CD8-positive, alpha-beta T cell (primary cell): ENCODE measurements at regions of chr1 and their contacts with region 1.

Region 1: GRCh38 chr1:43227143-43227764 is 42.5 kb upstream of the TMEM125 start:
- DNase-seq: peak; percentile 70 to 91 (median 82)
- ATAC-seq: peak; percentile 91
- H3K4me3 ChIP-seq: no peak overlapping the region
- H3K4me3 Mint-ChIP-seq: no peak overlapping the region
- H3K27ac ChIP-seq: no peak overlapping the region
- H3K27ac Mint-ChIP-seq: no peak overlapping the region
- H3K4me1 ChIP-seq: no peaks in the 10 kb centered on the region
- H3K4me1 Mint-ChIP-seq: no peaks in the 10 kb centered on the region
- H3K27me3 ChIP-seq: no peaks in the 10 kb centered on the region
- H3K27me3 Mint-ChIP-seq: peaks cover 3% of the 10 kb centered on the region
- CTCF ChIP-seq: peak; percentile 83

Region 2: DNA sequence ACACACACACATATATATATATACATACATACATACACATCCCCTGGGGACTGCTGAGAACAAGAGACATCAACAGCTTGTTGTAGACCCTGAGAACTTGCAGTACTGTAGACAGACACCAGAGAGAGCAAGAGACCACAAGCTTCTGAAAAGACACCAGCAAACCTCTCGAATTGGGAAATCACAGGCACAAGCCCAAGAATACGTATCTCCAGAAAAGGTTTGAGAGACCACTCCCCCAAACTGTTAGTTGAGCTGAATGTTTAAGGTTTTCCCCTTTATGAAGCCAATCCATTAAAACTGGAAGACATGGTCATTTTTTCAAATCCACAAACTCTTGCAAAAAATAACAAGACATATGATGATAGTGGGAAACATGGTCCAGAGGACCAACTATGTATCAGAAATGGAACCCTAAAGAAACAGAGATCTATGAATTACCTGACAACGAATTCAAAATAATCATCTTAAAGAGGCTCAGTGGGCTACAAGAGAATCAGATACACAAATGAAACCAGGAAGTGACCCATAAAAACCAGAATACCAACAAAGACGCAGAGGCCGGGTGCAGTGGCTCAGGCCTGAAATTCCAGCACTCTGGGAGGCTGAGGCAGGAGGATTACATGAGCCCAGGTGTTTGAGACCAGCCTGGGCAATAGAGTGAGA is 313.7 kb before region 1 on chr1:
- CTCF ChIA-PET with region 1: interaction called, 5 read pairs
- POLR2A ChIA-PET with region 1: no interaction called
- intact Hi-C with region 1: loop called in 1 of 2 experiments (anchors 1 kb)
- DNase-seq: peak in 6 of 9 experiments; percentile 45 to 87 (median 64)
- ATAC-seq: peak; percentile 99
- H3K4me3 ChIP-seq: no peak overlapping the region
- H3K4me3 Mint-ChIP-seq: no peak overlapping the region
- H3K27ac ChIP-seq: no peak overlapping the region
- H3K27ac Mint-ChIP-seq: no peak overlapping the region
- H3K4me1 ChIP-seq: no peaks in the 10 kb centered on the region
- H3K4me1 Mint-ChIP-seq: peaks cover 4% of the 10 kb centered on the region
- H3K27me3 ChIP-seq: no peaks in the 10 kb centered on the region
- H3K27me3 Mint-ChIP-seq: peaks cover 3% of the 10 kb centered on the region
- CTCF ChIP-seq: peak; percentile 85

Region 3: GRCh38 chr1:43156026-43156425 is 71.2 kb before region 1 on chr1:
- CTCF ChIA-PET with region 1: no interaction called
- POLR2A ChIA-PET with region 1: no interaction called
- intact Hi-C with region 1: no loop called
- DNase-seq: no peak
- ATAC-seq: no peak
- H3K4me3 ChIP-seq: no peak overlapping the region
- H3K4me3 Mint-ChIP-seq: no peak overlapping the region
- H3K27ac ChIP-seq: no peak overlapping the region
- H3K27ac Mint-ChIP-seq: no peak overlapping the region
- H3K4me1 ChIP-seq: no peaks in the 10 kb centered on the region
- H3K4me1 Mint-ChIP-seq: no peaks in the 10 kb centered on the region
- H3K27me3 ChIP-seq: peaks cover 0 to 4% of the 10 kb centered on the region in 2 experiments
- H3K27me3 Mint-ChIP-seq: peaks cover 16% of the 10 kb centered on the region
- CTCF ChIP-seq: no peak

Region 4: GRCh38 chr1:43172527-43172972 is 54.7 kb before region 1 on chr1:
- CTCF ChIA-PET with region 1: no interaction called
- POLR2A ChIA-PET with region 1: no interaction called
- intact Hi-C with region 1: no loop called
- DNase-seq: peak in 8 of 9 experiments; percentile 70 to 94 (median 84)
- ATAC-seq: peak; percentile 98
- H3K4me3 ChIP-seq: peak overlapping the region; percentile 89 to 93
- H3K4me3 Mint-ChIP-seq: peak overlapping the region; percentile 100
- H3K27ac ChIP-seq: peak overlapping the region; percentile 73 to 80
- H3K27ac Mint-ChIP-seq: peak overlapping the region; percentile 93
- H3K4me1 ChIP-seq: peaks cover 12% of the 10 kb centered on the region
- H3K4me1 Mint-ChIP-seq: peaks cover 32% of the 10 kb centered on the region
- H3K27me3 ChIP-seq: peaks cover 0 to 4% of the 10 kb centered on the region in 2 experiments
- H3K27me3 Mint-ChIP-seq: peaks cover 18% of the 10 kb centered on the region
- CTCF ChIP-seq: no peak

Region 5: GRCh38 chr1:43383449-43383848 is 156.2 kb after region 1 on chr1:
- CTCF ChIA-PET with region 1: interaction called, 13 read pairs
- POLR2A ChIA-PET with region 1: no interaction called
- intact Hi-C with region 1: no loop called
- DNase-seq: no peak
- ATAC-seq: no peak
- H3K4me3 ChIP-seq: no peak overlapping the region
- H3K4me3 Mint-ChIP-seq: no peak overlapping the region
- H3K27ac ChIP-seq: no peak overlapping the region
- H3K27ac Mint-ChIP-seq: no peak overlapping the region
- H3K4me1 ChIP-seq: peaks cover 6% of the 10 kb centered on the region
- H3K4me1 Mint-ChIP-seq: peaks cover 25% of the 10 kb centered on the region
- H3K27me3 ChIP-seq: no peaks in the 10 kb centered on the region
- H3K27me3 Mint-ChIP-seq: no peaks in the 10 kb centered on the region
- CTCF ChIP-seq: no peak

Region 6: DNA sequence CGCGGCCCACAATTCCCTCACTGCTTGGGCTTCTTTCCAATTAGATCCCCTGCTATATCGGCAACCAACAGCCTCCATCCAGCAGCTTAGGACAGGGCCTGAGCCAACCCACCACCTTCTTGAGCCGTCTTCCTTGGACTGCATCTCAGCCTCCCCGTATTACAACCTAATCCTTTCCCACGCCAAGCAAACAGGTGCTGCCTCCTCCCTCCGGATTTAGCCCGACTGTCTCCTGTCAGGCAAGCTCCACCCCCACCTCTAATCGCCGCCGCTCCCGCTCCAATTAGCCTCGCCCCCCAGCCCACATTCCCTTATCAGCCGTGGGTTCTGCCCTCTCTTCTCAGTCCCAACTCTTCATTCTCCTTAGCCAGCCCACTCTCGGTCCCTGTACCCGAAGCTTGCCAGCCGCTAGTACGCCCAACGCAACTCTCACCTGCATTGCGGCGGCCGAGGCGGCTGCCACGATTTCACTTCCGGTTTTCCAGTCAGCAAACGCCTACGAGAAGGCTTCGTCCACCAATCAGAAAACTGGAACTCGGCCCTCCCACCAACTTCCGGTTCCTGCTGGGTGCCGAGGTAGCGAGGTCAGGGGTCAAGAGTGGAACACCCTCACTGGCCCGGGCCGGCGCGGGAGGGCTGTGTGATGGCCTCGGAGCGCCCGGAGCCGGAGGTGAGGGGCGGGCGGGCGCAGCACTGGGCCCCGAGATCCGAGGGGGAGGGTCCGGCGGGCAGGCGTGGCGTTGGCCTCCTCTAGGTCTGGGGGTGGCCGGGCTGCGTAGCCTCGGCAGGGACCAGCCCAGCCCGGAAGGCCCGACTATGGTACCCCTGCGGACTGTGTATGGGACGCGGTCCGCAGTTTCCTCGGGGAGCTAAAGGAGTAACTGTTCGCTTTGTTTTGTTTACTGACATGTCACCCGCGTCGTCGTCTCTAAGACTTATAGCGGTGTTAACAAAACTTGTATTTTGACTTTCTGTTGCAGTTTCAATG is 162.4 kb after region 1 on chr1 and contains the starts of genes MED8 and SZT2:
- CTCF ChIA-PET with region 1: interaction called, 14 read pairs
- POLR2A ChIA-PET with region 1: no interaction called
- intact Hi-C with region 1: no loop called
- DNase-seq: peak; percentile 86 to 96 (median 92)
- ATAC-seq: peak; percentile 91
- H3K4me3 ChIP-seq: peak within 1 kb of the TSS; percentile 81 to 91
- H3K4me3 Mint-ChIP-seq: peak within 1 kb of the TSS; percentile 99
- H3K27ac ChIP-seq: peak within 1 kb of the TSS; percentile 70 to 86
- H3K27ac Mint-ChIP-seq: peak within 1 kb of the TSS; percentile 98
- H3K4me1 ChIP-seq: peaks cover 26% of the 10 kb centered on the region
- H3K4me1 Mint-ChIP-seq: peaks cover 57% of the 10 kb centered on the region
- H3K27me3 ChIP-seq: no peaks in the 10 kb centered on the region
- H3K27me3 Mint-ChIP-seq: no peaks in the 10 kb centered on the region
- CTCF ChIP-seq: no peak
- total RNA-seq, gene MED8: 18.8 to 20.2 TPM
- total RNA-seq, gene SZT2: 57.0 to 64.4 TPM

Region 7: GRCh38 chr1:43414634-43415223 is 187.5 kb after region 1 on chr1:
- CTCF ChIA-PET with region 1: interaction called, 231 read pairs
- POLR2A ChIA-PET with region 1: no interaction called
- intact Hi-C with region 1: loop called in 1 of 2 experiments (anchors 1 kb)
- DNase-seq: peak; percentile 37 to 75 (median 70)
- ATAC-seq: peak; percentile 99
- H3K4me3 ChIP-seq: no peak overlapping the region
- H3K4me3 Mint-ChIP-seq: no peak overlapping the region
- H3K27ac ChIP-seq: no peak overlapping the region
- H3K27ac Mint-ChIP-seq: peak overlapping the region; percentile 6
- H3K4me1 ChIP-seq: no peaks in the 10 kb centered on the region
- H3K4me1 Mint-ChIP-seq: no peaks in the 10 kb centered on the region
- H3K27me3 ChIP-seq: no peaks in the 10 kb centered on the region
- H3K27me3 Mint-ChIP-seq: no peaks in the 10 kb centered on the region
- CTCF ChIP-seq: peak; percentile 60

Region 8: DNA sequence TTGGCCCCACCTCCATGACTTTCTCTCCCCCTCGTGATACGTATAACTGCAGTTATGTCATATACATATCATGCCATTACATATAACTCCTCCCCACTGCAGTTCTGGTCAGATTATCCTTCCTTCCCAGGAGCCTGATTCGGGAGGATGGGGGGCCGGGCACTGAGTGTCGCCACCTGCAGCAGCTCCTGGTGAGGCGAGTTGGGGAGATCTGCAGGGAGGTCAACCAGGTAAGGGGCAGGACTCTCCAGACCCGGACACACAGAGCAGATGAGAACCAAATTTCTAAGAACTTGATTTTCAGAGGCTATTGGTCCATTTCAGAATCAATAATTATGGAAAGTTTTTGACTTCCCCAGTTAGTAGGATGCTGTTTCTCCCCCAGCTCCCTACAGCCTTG is 207.0 kb after region 1 on chr1:
- CTCF ChIA-PET with region 1: no interaction called
- POLR2A ChIA-PET with region 1: no interaction called
- intact Hi-C with region 1: no loop called
- DNase-seq: no peak
- ATAC-seq: no peak
- H3K4me3 ChIP-seq: no peak overlapping the region
- H3K4me3 Mint-ChIP-seq: no peak overlapping the region
- H3K27ac ChIP-seq: no peak overlapping the region
- H3K27ac Mint-ChIP-seq: peak overlapping the region; percentile 67
- H3K4me1 ChIP-seq: no peaks in the 10 kb centered on the region
- H3K4me1 Mint-ChIP-seq: no peaks in the 10 kb centered on the region
- H3K27me3 ChIP-seq: no peaks in the 10 kb centered on the region
- H3K27me3 Mint-ChIP-seq: no peaks in the 10 kb centered on the region
- CTCF ChIP-seq: no peak

Region 9: GRCh38 chr1:44049839-44050238 is 822.6 kb after region 1 on chr1:
- CTCF ChIA-PET with region 1: no interaction called
- POLR2A ChIA-PET with region 1: no interaction called
- intact Hi-C with region 1: loop called in 1 of 2 experiments (anchors 10 kb)
- DNase-seq: no peak
- ATAC-seq: no peak
- H3K4me3 ChIP-seq: no peak overlapping the region
- H3K4me3 Mint-ChIP-seq: no peak overlapping the region
- H3K27ac ChIP-seq: no peak overlapping the region
- H3K27ac Mint-ChIP-seq: no peak overlapping the region
- H3K4me1 ChIP-seq: no peaks in the 10 kb centered on the region
- H3K4me1 Mint-ChIP-seq: no peaks in the 10 kb centered on the region
- H3K27me3 ChIP-seq: no peaks in the 10 kb centered on the region
- H3K27me3 Mint-ChIP-seq: peaks cover 15% of the 10 kb centered on the region
- CTCF ChIP-seq: no peak